AG04450 (cell line): ENCODE measurements at regions of chr4 and their contacts with region 1.

Region 1: DNA sequence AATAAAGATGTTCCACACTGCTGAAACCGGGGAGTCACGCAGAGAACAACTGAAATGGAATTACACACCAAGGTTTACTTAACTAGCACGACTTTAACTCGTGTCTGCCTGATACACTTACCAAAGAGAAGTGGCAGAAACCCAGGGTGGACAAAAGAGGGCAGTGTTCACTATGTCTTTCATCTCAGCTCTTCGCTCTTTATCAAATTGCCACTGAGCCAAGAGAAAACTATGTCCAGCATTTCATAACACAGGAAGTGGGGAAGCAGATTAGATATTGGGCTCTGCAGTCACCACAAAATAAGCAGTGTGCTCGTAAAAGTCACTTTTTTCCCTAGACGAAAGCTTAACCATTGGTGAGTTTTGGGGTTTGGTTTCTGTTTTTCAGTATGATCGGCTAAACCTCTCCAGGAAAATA is 155.7 kb downstream of the CHIC2 start:
- DNase-seq: peak; percentile 87
- H3K4me3 ChIP-seq: peak overlapping the region; percentile 36
- H3K27ac ChIP-seq: peak overlapping the region; percentile 22
- H3K27me3 ChIP-seq: no peaks in the 10 kb centered on the region
- CTCF ChIP-seq: peak; percentile 82

Region 2: DNA sequence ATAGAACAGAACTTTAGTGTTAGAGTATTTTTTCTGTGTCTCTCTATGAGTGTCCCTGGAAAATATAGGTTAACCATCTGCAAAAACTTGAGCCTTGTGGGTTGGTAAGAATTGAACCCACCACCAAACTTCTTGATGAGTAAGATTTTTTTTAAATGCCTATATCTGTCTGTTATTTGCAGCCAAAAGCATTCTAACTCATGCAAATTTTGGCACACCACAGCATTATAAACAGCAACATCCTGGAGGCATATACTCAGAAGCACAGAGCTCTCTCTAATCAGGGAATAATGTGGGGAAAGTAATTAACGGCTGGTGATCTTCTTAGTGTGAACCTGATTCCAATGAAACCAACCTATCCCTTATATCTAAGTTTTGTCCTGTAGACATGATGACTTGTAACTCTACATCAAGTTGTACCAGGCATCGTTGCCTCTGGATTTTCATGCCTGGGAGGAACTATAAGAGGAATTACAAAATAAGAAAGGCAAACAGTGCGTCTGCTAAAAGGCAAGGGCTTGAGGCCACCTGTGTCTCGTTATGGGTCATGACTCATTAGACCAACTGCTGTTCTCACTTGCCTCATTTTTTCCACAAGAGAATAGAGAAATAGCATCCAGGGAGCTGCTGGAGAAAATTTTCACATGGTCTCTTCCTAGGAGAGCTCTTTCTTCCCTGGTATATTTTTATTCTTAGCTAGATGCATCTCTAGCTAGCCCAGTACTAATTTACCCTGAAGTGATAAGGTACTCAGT is 46.6 kb before region 1 on chr4:
- CTCF ChIA-PET with region 1: no interaction called
- POLR2A ChIA-PET with region 1: interaction called, 12 read pairs
- DNase-seq: peak; percentile 88
- H3K4me3 ChIP-seq: no peak overlapping the region
- H3K27ac ChIP-seq: peak overlapping the region; percentile 0
- H3K27me3 ChIP-seq: no peaks in the 10 kb centered on the region
- CTCF ChIP-seq: no peak

Region 3: GRCh38 chr4:53889326-53890055 is 19.2 kb before region 1 on chr4:
- CTCF ChIA-PET with region 1: no interaction called
- POLR2A ChIA-PET with region 1: no interaction called
- DNase-seq: peak; percentile 72
- H3K4me3 ChIP-seq: peak overlapping the region; percentile 28
- H3K27ac ChIP-seq: peak overlapping the region; percentile 63
- H3K27me3 ChIP-seq: no peaks in the 10 kb centered on the region
- CTCF ChIP-seq: no peak

Region 4: DNA sequence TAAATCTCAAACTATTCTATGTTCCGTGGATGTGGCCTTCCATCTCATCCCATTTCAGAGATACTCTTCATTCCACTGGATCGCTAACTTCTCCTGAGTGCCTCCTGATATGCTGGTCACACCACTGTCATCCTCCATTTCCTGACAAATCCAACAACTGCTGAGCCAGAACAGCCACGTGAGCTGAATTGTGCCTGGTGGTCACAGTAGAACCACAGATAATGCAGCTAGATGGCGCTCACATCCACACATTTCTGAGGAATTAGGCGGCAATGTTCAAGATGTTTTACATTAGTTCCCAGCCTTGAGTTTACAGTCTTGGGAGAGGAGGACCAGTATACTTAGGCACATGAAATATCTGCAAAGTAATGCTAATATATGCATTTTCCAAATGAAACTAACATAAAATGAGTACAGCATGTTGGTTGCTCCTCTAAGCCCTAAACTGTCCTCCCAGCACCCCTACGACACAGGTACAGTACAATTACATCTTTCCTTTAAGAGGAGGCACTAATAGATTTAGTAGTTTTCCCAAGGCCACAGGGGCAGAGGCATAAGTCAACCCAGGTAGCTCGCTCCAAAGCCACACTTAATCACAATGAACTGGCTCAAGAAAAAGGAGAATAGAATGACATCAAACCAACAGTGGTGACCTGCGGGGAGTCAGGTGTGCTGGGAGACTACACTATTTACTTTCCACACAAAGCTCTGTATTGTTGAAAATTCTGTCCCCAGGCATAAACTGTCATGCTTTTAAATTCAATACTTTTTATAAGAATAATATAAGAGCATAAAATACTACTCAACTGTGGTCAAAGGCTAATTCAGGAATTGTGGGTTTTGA is 21.5 kb after region 1 on chr4:
- CTCF ChIA-PET with region 1: interaction called, 21 read pairs
- POLR2A ChIA-PET with region 1: interaction called, 13 read pairs
- DNase-seq: peak; percentile 69
- H3K4me3 ChIP-seq: no peak overlapping the region
- H3K27ac ChIP-seq: peak overlapping the region; percentile 54
- H3K27me3 ChIP-seq: no peaks in the 10 kb centered on the region
- CTCF ChIP-seq: peak; percentile 73

Region 5: DNA sequence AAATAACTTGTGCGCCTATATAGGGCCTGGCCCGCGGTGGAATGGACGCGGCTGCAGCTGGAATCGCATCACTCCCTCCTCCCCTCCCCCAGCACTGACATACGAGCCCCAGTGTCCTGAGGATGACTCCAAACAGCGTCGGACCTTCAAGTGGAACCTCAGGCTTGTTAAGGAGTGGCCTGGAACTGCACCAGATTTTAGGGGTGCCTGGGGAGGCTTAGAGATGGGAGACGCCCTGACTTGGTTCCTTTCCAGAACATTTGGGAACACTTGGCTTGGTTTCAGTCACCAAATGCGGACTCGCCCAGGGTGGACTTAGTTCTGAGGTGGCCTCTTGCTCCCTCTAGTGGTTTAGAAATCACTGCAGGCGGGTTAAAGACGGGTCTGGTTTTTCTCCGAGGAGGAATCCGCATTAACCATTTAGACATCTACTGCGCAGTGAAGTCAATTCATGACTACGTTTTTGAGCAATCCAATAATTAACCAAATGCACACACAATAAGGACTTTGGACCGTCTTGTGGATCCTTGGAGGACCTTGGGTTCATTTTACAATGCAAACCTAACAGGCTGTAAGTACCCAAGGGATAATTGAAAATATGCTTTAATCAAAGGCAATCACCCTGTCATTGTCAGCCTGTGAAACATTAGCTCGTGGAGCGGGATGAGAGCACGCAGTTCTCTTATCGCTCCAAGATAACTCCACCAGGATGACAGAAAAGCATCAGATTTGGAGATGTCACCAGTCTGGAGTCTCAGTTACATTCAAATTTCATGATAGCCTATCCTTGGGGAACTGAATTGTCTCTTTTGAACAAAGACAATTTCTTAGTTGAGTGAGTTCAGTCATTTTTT is 309.2 kb after region 1 on chr4:
- CTCF ChIA-PET with region 1: interaction called, 25 read pairs
- POLR2A ChIA-PET with region 1: no interaction called
- DNase-seq: peak; percentile 64
- H3K4me3 ChIP-seq: peak overlapping the region; percentile 61
- H3K27ac ChIP-seq: no peak overlapping the region
- H3K27me3 ChIP-seq: no peaks in the 10 kb centered on the region
- CTCF ChIP-seq: peak; percentile 92

Region 6: GRCh38 chr4:54233277-54233696 is 324.6 kb after region 1 on chr4:
- CTCF ChIA-PET with region 1: interaction called, 26 read pairs
- POLR2A ChIA-PET with region 1: interaction called, 14 read pairs
- DNase-seq: peak; percentile 61
- H3K4me3 ChIP-seq: peak overlapping the region; percentile 97
- H3K27ac ChIP-seq: peak overlapping the region; percentile 73
- H3K27me3 ChIP-seq: no peaks in the 10 kb centered on the region
- CTCF ChIP-seq: peak; percentile 72